Endothelial cell of umbilical vein (primary cell): ENCODE measurements at regions of chr17 and their contacts with region 1.

Region 1: DNA sequence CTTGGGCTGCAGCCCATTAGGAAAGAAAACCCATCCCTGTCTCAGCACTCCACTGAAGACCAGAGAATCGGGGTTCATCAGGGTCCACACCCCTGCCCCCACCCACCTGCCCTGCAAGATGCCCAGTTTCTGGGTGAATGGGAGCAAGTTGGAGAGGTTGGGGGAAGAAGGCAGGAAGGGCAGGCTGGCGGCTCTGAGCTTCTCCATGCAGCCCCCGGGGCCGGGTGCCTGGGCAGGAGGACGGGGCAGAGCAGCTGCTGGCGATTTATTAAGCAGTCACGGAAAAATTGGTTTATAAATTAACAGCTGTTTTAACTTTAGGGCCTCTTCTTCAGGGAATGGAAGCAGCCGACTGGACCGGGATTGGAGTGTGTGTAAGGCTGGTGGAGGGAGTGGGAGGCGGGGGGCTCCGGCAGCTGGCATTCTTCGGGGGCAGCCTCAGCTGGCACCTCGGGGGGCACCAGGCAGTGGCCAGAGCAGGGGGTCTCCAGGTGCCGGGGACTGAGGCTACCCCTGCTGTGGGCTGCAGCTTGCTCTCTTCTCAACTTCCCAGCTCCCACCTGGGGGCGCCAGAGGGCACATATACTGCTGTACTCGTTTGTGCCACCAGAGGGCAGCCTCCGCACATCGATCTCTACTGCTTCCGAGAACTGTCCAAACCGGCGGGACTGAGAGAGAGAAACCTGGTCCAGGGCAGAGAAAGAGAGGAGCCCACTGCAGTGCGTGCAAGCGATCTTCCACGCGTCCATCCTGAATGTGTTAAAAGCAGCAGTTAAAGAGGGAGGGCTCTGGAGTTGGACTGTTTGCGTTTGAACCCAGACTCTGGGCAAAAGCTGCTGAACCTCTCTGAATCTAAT is 5.0 kb upstream of the PPP1R1B start:
- DNase-seq: peak; percentile 87
- H3K4me3 ChIP-seq: no peak overlapping the region
- H3K27ac ChIP-seq: no peak overlapping the region
- H3K4me1 ChIP-seq: peaks cover 10% of the 10 kb centered on the region
- H3K27me3 ChIP-seq: peaks cover 24 to 26% of the 10 kb centered on the region in 2 experiments
- CTCF ChIP-seq: peak; percentile 100
- POLR2A ChIP-seq: no peak

Region 2: DNA sequence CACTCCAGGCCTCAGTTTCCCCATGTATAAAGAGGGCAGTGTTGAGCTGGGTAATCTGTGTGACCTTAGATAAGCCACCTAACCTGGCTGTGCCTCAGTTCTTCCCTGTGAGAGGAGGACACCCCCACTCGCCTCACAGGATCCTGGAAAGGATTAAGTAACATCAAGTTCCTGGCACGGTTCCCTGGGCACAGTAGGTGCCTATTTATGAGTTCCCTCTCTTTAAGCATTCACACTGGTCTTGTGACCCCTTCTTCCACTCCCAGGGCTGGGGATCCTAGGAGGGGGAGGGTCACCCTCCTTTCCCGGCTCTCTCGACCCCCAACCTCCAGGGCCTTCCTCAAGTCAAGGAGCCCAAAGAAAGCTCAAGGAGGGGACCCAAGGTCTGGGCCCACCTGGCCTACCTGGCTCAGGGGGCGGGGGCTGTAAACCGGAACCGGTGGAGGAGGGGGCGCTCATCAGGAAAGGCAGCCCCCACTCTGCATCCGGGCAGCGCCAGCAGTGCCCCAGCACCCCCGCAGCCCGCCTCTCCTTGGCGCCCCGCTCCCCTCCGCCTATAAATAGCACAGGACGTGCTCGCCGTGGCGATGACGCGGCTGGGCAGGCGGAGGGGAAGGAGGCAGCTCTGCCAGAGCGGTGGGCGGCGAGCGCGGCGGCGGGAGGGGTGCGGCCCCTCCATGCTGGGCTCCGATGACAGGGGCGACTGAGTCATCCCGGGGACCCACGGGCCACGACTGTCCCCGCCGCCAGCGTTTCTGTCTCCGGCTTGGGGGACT is 412.2 kb before region 1 on chr17:
- CTCF ChIA-PET with region 1: interaction called, 13 read pairs
- POLR2A ChIA-PET with region 1: no interaction called
- dilution Hi-C with region 1: no loop called
- intact Hi-C with region 1: no loop called
- DNase-seq: peak; percentile 29
- H3K4me3 ChIP-seq: peak overlapping the region in 2 of 3 experiments; percentile 7 to 27
- H3K27ac ChIP-seq: no peak overlapping the region
- H3K4me1 ChIP-seq: peaks cover 5% of the 10 kb centered on the region
- H3K27me3 ChIP-seq: peaks cover 0 to 2% of the 10 kb centered on the region in 2 experiments
- CTCF ChIP-seq: no peak
- POLR2A ChIP-seq: no peak

Region 3: GRCh38 chr17:39473310-39473709 is 148.4 kb before region 1 on chr17:
- CTCF ChIA-PET with region 1: no interaction called
- POLR2A ChIA-PET with region 1: no interaction called
- dilution Hi-C with region 1: no loop called
- intact Hi-C with region 1: no loop called
- DNase-seq: no peak
- H3K4me3 ChIP-seq: no peak overlapping the region
- H3K27ac ChIP-seq: no peak overlapping the region
- H3K4me1 ChIP-seq: no peaks in the 10 kb centered on the region
- H3K27me3 ChIP-seq: no peaks in the 10 kb centered on the region
- CTCF ChIP-seq: no peak
- POLR2A ChIP-seq: no peak

Region 4: DNA sequence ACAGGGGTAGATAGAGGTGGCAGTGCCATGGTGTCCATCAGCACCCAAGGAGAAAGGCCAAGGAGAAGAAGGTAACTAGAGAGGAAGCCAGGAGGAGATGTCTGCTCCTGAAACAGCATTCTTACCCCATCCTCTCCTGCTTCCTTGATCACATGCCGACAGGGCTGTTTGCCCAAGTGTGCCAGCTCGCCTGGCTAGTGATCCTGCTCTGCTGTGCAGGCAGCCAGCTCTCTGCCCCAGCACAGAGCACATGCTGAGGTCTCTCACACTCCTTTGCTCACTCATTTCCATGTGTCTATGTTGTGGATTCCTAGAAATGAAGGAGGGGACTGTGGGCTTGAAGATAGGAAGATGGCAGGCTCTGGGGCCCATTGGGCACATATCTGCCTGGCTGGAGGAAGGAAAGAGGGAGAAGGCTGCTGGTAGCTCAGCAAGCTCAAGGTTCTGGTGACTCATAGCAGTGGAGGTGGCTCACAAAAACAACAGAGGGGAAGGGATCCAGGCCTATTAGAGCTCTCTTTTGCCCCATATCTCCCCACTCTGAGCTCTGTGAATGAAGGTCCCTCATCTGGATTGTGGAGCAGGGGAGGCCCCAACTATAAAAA is 68.3 kb before region 1 on chr17:
- CTCF ChIA-PET with region 1: interaction called, 164 read pairs
- POLR2A ChIA-PET with region 1: no interaction called
- dilution Hi-C with region 1: no loop called
- intact Hi-C with region 1: loop called (anchors 1 kb)
- DNase-seq: peak; percentile 32
- H3K4me3 ChIP-seq: no peak overlapping the region
- H3K27ac ChIP-seq: no peak overlapping the region
- H3K4me1 ChIP-seq: peaks cover 8% of the 10 kb centered on the region
- H3K27me3 ChIP-seq: no peaks in the 10 kb centered on the region
- CTCF ChIP-seq: no peak
- POLR2A ChIP-seq: no peak

Region 5: DNA sequence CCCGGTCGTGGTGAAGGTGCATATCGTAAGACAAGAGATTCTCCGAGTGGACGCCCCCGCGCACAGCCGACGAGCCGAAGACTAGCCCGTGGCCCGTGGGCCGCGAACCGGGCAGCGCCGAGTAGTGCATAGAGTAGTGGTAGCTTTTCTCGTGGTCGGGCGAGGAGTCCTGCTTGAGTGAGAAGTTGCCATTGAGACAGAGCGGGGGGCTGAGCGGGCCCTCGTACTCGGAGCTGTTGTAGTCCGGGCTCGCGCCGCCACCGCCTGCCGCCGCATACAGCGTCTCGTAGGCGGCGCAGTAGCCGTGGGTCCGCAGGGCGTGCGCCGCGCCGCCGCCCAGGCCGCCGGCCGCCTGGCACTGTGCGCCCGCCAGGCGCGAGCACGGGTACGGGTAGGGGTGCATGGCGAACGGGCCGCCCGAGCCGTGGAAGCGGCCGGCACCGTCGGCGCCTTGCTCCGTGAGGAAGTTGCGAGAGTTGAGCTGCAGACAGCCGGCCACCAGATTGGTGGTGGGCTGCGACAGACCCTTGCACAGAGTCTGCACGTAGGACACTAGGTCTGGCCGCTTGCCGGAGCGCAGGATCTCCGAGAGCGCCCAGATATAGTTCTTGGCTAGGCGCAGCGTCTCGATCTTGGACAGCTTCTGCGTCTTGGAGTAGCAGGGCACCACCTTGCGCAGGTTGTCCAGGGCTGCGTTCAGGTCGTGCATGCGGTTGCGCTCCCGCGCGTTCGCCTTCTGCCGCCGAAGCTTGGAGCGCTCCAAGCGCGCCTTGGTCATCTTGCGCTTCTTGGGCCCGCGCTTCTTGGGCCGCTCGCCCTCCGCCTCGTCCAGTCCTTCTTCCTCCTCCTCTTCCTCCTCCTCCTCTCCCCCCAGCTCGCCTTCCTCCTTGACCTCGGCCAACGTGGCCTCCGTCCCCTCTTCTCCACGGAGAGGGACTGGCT is 16.0 kb before region 1 on chr17:
- CTCF ChIA-PET with region 1: interaction called, 27 read pairs
- POLR2A ChIA-PET with region 1: no interaction called
- dilution Hi-C with region 1: no loop called
- intact Hi-C with region 1: no loop called
- DNase-seq: peak; percentile 13
- H3K4me3 ChIP-seq: no peak overlapping the region
- H3K27ac ChIP-seq: no peak overlapping the region
- H3K4me1 ChIP-seq: no peaks in the 10 kb centered on the region
- H3K27me3 ChIP-seq: peaks cover 72 to 87% of the 10 kb centered on the region in 2 experiments
- CTCF ChIP-seq: no peak
- POLR2A ChIP-seq: no peak

Region 6: DNA sequence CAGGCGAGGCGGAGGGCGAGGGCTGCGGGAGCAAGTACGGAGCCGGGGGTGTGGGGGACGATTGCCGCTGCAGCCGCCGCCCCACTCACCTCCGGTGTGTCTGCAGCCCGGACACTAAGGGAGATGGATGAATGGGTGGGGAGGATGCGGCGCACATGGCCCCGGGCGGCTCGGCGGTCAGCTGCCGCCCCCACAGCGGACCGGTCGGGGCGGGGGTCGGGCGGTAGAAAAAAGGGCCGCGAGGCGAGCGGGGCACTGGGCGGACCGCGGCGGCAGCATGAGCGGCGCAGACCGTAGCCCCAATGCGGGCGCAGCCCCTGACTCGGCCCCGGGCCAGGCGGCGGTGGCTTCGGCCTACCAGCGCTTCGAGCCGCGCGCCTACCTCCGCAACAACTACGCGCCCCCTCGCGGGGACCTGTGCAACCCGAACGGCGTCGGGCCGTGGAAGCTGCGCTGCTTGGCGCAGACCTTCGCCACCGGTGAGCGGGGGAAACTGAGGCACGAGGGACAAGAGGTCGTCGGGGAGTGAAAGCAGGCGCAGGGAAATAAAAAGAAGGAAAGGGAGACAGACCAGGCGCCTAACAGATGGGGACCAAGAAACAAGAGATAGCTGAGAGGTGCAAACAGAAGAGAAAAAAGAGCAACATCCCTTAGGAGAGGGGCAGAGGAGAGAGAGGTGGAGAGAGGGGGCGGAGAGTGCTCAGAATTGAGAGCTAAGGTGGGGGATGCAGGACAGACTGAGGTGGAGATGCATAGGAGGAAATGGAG is 46.6 kb after region 1 on chr17 and contains the start of gene PNMT:
- CTCF ChIA-PET with region 1: interaction called, 291 read pairs
- POLR2A ChIA-PET with region 1: interaction called, 9 read pairs
- dilution Hi-C with region 1: no loop called
- intact Hi-C with region 1: loop called (anchors 1 kb)
- DNase-seq: peak; percentile 48
- H3K4me3 ChIP-seq: peak within 1 kb of the TSS in 1 of 3 experiments; percentile 3
- H3K27ac ChIP-seq: no peak within 1 kb of the TSS
- H3K4me1 ChIP-seq: no peaks in the 10 kb centered on the region
- H3K27me3 ChIP-seq: peaks cover 6 to 10% of the 10 kb centered on the region in 2 experiments
- CTCF ChIP-seq: peak; percentile 77 to 84
- POLR2A ChIP-seq: no peak
- total RNA-seq, gene PNMT: not detected in 2 replicates

Region 7: DNA sequence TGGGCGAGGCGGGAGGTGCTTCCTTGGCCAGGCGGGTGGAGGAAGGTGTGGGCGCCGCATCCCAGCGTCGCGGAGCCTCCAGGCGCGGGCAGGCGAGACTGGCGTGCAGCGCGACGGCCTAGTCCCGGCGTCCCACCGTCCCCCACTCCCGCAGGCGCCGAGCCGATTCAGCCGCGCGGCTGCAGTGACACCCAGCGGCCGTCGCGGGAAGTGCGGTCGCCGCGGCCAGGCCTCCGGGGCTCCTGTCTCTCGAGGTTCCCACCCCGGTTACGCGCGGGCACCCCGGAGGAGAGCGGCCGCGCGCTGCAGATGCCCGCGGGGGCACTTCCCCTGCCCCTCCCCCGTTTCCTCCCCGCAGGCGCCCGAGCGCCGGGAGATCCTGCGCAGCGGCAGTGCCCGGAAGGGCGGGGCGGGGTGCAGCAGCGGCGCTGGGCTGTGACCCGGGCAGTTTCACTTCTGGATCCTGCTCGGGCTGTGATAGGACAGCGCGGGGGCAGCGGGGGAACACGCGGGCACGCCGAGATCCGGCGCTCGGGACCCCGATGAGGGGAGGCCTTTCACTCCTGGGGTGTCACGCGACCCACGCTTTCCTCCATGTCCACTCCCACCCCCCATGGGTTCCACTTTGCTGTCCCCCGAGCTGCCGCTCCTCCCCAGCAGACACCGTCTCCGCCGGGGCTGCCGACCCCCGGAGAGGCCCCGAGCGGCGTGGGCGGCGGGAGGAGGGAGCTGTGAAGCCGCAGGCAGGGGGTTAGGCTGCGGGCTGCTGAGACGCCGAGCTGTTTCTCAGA is 132.6 kb after region 1 on chr17:
- CTCF ChIA-PET with region 1: interaction called, 84 read pairs
- POLR2A ChIA-PET with region 1: no interaction called
- dilution Hi-C with region 1: no loop called
- intact Hi-C with region 1: loop called (anchors 1 kb)
- DNase-seq: peak; percentile 69
- H3K4me3 ChIP-seq: peak overlapping the region; percentile 54 to 71 (median 60)
- H3K27ac ChIP-seq: no peak overlapping the region
- H3K4me1 ChIP-seq: peaks cover 9% of the 10 kb centered on the region
- H3K27me3 ChIP-seq: peaks cover 8 to 15% of the 10 kb centered on the region in 2 experiments
- CTCF ChIP-seq: peak; percentile 77 to 85
- POLR2A ChIP-seq: peak; percentile 62

Region 8: DNA sequence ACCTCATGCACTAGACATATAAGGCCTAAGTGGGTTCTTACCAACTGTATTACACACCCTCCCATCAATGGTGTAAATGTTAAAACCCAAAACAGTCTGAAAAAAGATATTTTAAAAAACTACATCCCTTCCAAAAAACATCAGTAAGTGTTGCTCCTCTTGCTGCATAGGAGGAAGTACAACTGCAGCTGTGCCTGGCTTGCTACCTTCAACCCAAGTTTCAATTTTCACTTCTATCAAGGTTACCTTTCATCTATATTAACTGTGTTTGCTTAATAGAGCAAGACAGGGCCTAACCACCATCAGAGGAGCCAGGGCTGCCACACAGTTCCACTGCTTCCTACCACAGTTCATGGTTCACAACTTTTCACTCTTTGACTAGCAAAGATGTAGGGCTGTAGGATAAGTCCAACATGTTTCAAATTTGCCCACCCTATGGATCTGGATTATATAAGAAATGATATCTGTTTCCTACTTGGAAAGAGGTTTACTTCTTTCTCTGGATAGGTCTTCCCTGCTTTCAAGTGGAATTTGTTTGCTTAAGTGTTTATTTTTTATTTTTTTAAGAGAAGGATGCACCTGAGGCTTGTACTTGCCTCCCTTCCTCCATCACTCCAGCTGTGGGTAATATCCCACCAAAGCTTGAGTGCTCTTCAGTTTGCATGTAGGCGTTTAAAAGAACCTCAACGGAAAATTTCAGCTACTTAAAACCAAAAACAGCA is 172.7 kb after region 1 on chr17:
- CTCF ChIA-PET with region 1: no interaction called
- POLR2A ChIA-PET with region 1: no interaction called
- dilution Hi-C with region 1: no loop called
- intact Hi-C with region 1: no loop called
- DNase-seq: no peak
- H3K4me3 ChIP-seq: no peak overlapping the region
- H3K27ac ChIP-seq: no peak overlapping the region
- H3K4me1 ChIP-seq: no peaks in the 10 kb centered on the region
- H3K27me3 ChIP-seq: peaks cover 33 to 59% of the 10 kb centered on the region in 2 experiments
- CTCF ChIP-seq: no peak
- POLR2A ChIP-seq: no peak